ENCODE measurements at regions of chr12 and their contacts with region 1.

Region 1: DNA sequence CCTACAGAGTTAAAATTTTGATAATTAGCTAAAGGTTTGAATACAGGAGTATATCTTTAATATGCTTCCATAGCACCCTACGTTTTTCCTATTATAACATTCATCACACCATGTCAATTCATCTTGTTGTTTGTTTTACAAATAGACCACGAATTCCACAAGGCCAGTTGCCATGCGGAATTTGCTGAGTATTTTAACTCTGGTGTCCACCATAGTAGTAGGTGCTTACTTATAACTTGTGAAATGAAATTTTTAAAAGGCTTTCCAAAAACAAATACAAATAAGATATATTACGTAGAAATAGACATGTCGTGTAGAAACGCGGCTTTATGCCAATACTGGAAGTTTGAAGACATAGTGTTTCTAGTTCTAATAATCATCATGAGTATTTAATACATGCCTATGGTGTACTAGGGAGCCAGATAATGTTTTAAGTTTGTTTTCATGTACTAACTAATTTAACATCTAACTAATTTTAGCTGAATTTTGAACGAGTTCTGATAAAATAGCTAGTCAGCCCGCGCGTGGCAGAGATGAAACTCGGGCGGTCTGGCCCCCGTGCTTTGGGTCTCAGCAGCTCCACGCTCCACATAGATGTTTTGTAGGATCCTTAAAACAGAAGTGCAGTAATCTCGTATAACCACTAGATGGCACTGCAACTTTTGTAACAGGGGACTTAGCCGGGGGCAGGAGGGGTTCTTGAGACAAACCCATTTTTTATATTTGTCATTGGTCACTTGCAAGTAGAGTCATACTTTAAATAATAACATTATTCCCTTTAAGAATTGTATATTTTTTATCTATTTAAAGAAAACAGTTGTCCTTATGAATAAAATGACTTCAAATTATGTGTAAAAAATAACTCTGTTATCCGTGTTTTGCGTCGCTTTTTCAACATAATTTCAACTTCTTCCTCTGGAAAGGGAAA is 10.2 kb downstream of the CD69 start:
- DNase-seq: peak; percentile 74 to 77
- ATAC-seq: peak; percentile 88 to 97
- H3K4me3 ChIP-seq: 0 out of 3 replicates have a peak overlapping the region, but pooled peaks have one; percentile 16
- H3K27ac ChIP-seq: no peak overlapping the region
- H3K4me1 ChIP-seq: 0 out of 3 replicates have a peak, but pooled peaks cover 3% of the 10 kb centered on the region
- CTCF ChIP-seq: peak; percentile 75
- EP300 ChIP-seq: no peak
- POLR2A ChIP-seq: no peak
- RAD21 ChIP-seq: peak; percentile 68 to 79

Region 2: GRCh38 chr12:8860165-8860961 is 890.2 kb before region 1 on chr12:
- CTCF ChIA-PET with region 1: no interaction called
- POLR2A ChIA-PET with region 1: no interaction called
- DNase-seq: peak in 1 of 2 experiments; percentile 69
- ATAC-seq: peak; percentile 81 to 93; a peak in 5 of 6 replicates
- H3K4me3 ChIP-seq: no peak overlapping the region
- H3K27ac ChIP-seq: no peak overlapping the region
- H3K4me1 ChIP-seq: no peaks in the 10 kb centered on the region
- CTCF ChIP-seq: peak; percentile 42; the same call in 2 of the 3 replicates
- EP300 ChIP-seq: no peak
- POLR2A ChIP-seq: no peak
- RAD21 ChIP-seq: peak; percentile 38 to 57; a peak in 4 of 5 replicates

Region 3: DNA sequence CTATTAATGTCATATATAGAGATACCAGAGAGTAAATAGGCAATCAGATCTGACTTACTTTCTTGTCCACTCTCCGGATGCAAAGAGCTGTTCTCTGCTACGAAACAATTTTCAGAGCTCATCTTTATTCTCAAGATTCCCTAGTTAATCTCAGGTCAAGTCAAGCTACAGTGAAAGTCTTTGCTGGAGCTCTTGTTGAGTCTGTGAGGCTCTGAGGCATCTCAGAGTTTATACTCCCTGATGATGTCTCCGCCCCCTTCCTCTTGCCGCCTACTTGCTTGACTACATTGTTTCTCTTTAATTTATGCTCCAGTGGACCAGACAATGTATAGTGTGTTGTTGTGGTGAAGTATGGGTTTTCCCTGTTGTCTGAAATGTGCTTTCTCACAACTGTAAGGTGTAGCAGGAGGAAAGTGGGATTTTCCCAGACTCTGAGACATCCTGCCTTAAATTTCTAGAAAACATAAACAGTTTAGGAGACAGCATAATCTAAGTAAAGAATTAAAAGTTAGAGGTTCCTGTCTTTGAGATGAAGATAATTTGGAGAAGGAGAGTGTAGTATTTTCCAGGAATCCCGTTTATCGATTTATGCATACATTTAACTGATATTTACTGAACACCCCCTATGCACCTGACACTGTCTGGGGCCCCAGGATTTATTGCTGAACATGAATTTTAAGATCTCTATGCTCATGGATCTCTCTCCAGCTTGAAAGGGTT is 10.3 kb after region 1 on chr12 and contains the start of gene CD69:
- CTCF ChIA-PET with region 1: interaction called, 41 read pairs
- POLR2A ChIA-PET with region 1: no interaction called
- DNase-seq: no peak
- ATAC-seq: no peak
- H3K4me3 ChIP-seq: no peak within 1 kb of the TSS
- H3K27ac ChIP-seq: no peak within 1 kb of the TSS
- H3K4me1 ChIP-seq: no peaks in the 10 kb centered on the region
- CTCF ChIP-seq: no peak
- EP300 ChIP-seq: no peak
- POLR2A ChIP-seq: no peak
- RAD21 ChIP-seq: no peak
- polyA plus RNA-seq, gene CD69: not detected in 2 replicates

Region 4: DNA sequence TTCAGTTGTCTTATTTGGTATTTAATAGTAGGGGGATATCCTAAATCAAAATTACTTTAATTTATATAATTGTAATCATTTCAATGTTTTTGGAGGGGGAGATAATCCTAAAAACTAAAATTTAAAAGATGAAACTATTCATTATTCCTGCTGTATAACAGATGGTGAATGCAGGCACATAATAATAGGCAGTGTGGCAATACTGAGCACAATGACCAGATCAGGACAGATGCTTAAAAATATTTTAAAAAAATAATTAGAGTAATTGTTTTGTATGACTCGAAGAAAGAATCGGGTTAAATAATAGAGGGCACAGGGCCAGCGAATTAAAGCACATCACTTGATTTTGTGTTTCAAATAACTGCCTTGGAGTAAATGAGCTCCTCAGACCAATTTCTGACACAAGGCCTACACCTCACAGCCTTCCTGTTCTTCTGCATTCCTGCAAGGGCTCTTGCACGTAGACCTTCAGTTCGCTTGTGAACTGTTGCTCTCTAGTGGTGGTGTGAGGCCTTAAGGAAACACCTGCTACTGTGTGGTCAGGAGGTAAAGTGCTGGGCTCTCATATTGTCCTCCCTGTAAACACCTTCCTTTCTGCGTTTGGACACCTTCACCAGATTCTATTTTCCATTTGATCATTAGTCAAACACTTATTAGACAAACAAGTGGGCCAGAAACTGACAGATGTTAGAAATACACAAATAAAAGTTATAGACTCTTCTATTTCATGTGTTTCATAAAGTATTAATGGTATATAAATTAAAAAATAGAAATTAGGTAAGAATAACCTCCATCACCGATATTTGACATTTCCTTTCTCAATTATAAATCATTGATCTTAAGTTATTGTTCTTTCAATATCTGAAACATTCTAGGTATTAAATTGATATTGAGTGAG is 47.4 kb after region 1 on chr12:
- CTCF ChIA-PET with region 1: interaction called, 13 read pairs
- POLR2A ChIA-PET with region 1: no interaction called
- DNase-seq: peak; percentile 13 to 84
- ATAC-seq: peak; percentile 96 to 98
- H3K4me3 ChIP-seq: no peak overlapping the region
- H3K27ac ChIP-seq: no peak overlapping the region
- H3K4me1 ChIP-seq: no peaks in the 10 kb centered on the region
- CTCF ChIP-seq: peak; percentile 47
- EP300 ChIP-seq: no peak
- POLR2A ChIP-seq: no peak
- RAD21 ChIP-seq: peak; percentile 56 to 68; a peak in 4 of 5 replicates

Region 5: GRCh38 chr12:9925708-9926393 is 175.3 kb after region 1 on chr12:
- CTCF ChIA-PET with region 1: interaction called, 18 read pairs
- POLR2A ChIA-PET with region 1: no interaction called
- DNase-seq: peak; percentile 18 to 50
- ATAC-seq: peak; percentile 74 to 78; a peak in 5 of 6 replicates
- H3K4me3 ChIP-seq: no peak overlapping the region
- H3K27ac ChIP-seq: no peak overlapping the region
- H3K4me1 ChIP-seq: no peaks in the 10 kb centered on the region
- CTCF ChIP-seq: peak; percentile 70
- EP300 ChIP-seq: no peak
- POLR2A ChIP-seq: no peak
- RAD21 ChIP-seq: peak; percentile 52 to 57

Measured in A549 (cell line).